ENCODE measurements at regions of chr22 and their contacts with region 1.

Region 1: DNA sequence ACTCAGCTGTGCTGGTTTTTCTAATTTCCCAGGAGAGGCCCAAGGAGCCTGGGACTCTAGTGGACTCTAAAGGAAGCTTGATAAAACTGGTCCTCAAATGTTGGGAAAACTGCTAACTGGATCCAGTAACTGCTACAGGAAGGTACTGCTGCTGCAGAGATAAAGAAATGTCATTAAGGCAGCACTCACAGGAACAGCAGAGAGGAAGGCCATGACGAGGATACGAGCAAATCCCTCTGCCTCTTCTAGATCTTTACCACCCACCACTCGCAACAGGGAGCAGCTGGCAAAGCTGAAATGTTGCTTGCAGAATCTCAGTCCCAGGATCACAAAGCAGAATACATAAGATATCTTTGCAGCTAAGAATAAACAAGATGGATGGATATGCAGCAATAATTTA is 23.5 kb downstream of the TTC28 start:
- DNase-seq: no peak
- H3K4me3 ChIP-seq: no peak overlapping the region
- H3K4me3 Mint-ChIP-seq: no peak overlapping the region
- H3K27ac ChIP-seq: no peak overlapping the region
- H3K27ac Mint-ChIP-seq: no peak overlapping the region
- H3K4me1 ChIP-seq: no peaks in the 10 kb centered on the region
- H3K4me1 Mint-ChIP-seq: no peaks in the 10 kb centered on the region
- H3K27me3 ChIP-seq: peaks cover 0 to 2% of the 10 kb centered on the region in 2 donors
- H3K27me3 Mint-ChIP-seq: peaks cover 0 to 28% (median 1%) of the 10 kb centered on the region in 3 donors
- CTCF ChIP-seq: no peak

Region 2: DNA sequence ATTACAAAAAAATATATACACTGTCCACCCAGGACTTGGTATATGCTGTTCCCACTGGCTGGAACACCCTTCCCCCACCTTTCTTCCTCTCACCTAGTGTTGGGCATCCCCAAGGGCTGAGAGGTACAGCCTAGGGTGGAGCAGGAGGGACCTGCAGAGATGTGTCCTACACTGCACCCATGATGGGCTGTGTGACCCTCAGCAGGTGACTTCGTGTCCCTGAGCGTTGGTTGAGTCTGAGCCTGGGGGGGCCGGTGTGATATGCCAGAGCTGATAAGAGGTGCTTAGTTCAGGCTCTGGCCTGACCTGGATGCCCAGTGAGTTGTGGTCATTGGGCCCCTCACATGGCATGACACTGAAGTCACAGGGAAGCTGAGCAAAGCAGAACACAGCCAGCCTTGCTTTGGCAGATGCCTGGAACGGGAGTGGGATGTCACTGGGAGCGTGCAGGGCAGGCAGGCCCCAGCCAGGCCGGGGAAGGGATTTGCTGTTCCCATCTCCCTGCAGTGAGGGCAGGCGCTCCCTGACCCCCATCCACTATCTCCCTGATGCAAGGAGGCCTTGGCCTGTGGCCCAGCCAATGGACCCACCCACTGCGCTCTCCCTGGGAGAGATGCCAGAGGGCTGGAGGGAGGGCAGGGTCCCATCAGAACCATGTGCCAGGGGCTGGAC is 993.7 kb before region 1 on chr22:
- intact Hi-C with region 1: no loop called
- DNase-seq: no peak
- H3K4me3 ChIP-seq: no peak overlapping the region
- H3K4me3 Mint-ChIP-seq: no peak overlapping the region
- H3K27ac ChIP-seq: no peak overlapping the region
- H3K27ac Mint-ChIP-seq: no peak overlapping the region
- H3K4me1 ChIP-seq: peaks cover 0 to 2% of the 10 kb centered on the region in 2 donors
- H3K4me1 Mint-ChIP-seq: peaks cover 10% of the 10 kb centered on the region
- H3K27me3 ChIP-seq: no peaks in the 10 kb centered on the region
- H3K27me3 Mint-ChIP-seq: peaks cover 0 to 8% (median 0%) of the 10 kb centered on the region in 3 donors
- CTCF ChIP-seq: no peak

Region 3: DNA sequence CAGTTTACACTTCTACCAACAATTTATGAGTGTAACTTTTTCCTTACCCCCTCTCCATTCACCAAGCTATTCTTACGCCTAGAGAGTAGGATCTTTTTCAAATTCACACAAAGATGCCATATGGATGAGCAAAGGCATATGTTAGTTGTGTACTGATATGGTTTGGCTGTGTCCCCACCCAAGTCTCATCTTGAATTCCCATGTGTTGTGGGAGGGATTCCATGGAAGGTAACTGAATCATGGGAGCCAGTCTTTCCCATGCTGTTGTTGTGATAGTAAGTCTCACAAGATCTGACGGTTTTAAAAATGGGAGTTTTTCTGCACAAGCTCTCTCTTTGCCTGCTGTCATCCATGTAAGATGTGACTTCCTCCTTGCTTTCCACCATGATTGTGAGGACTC is 16.9 kb before region 1 on chr22:
- intact Hi-C with region 1: no loop called
- DNase-seq: no peak
- H3K4me3 ChIP-seq: no peak overlapping the region
- H3K4me3 Mint-ChIP-seq: no peak overlapping the region
- H3K27ac ChIP-seq: no peak overlapping the region
- H3K27ac Mint-ChIP-seq: no peak overlapping the region
- H3K4me1 ChIP-seq: no peaks in the 10 kb centered on the region
- H3K4me1 Mint-ChIP-seq: no peaks in the 10 kb centered on the region
- H3K27me3 ChIP-seq: no peaks in the 10 kb centered on the region
- H3K27me3 Mint-ChIP-seq: peaks cover 0 to 9% (median 5%) of the 10 kb centered on the region in 3 donors
- CTCF ChIP-seq: no peak

Region 4: DNA sequence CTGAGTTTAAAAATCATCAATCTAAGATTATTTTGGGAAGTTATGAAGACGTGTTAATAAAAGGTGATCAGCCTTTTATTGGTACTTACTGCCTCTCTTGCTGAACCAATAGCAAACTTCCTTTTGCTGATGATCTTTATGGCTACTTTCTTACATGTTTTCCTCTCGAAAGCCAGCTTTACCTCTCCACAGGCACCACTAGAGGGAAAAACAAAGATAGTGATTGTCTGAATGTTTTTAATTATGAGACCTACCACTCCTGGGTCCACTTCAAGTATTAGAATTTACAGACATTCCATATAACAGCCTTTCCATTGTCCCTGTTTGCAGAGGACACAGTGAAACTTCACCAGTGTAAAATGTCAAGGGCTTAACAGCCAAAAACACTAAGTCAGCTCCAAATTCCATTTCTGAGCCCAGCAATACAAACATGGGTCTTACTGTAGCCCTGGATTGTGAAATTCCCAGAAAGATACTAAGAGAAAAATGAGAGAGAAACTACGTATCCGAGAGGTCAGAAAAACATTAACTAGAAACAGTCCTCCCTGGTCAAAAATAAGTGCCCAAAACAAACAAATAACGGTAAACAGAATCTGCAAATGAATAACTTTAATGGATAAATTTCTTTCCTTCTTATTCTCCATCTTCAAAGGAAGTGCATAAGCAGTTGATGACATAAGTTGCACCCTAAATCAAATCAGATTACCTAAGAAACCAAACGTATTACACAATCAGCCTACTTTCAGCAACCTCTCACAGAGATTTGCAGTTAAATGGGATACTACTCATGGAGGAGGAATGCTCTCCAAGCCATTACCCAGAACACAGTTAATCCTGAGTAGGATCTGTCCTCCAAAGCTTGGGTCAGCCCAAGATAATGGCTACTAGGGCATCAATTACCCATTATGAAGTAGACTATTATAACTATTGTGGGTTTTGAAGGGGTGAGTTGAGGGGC is 55.9 kb after region 1 on chr22:
- intact Hi-C with region 1: loop called in 1 of 2 experiments (anchors 10 kb)
- DNase-seq: peak in 1 of 3 donors; percentile 1
- H3K4me3 ChIP-seq: no peak overlapping the region
- H3K4me3 Mint-ChIP-seq: no peak overlapping the region
- H3K27ac ChIP-seq: no peak overlapping the region
- H3K27ac Mint-ChIP-seq: no peak overlapping the region
- H3K4me1 ChIP-seq: peaks cover 0 to 3% of the 10 kb centered on the region in 2 donors
- H3K4me1 Mint-ChIP-seq: peaks cover 6% of the 10 kb centered on the region
- H3K27me3 ChIP-seq: no peaks in the 10 kb centered on the region
- H3K27me3 Mint-ChIP-seq: peaks cover 0 to 1% (median 0%) of the 10 kb centered on the region in 3 donors
- CTCF ChIP-seq: no peak